Ascending aorta (tissue), 2 donors: ENCODE measurements at regions of chr10 and their contacts with region 1.

Region 1: DNA sequence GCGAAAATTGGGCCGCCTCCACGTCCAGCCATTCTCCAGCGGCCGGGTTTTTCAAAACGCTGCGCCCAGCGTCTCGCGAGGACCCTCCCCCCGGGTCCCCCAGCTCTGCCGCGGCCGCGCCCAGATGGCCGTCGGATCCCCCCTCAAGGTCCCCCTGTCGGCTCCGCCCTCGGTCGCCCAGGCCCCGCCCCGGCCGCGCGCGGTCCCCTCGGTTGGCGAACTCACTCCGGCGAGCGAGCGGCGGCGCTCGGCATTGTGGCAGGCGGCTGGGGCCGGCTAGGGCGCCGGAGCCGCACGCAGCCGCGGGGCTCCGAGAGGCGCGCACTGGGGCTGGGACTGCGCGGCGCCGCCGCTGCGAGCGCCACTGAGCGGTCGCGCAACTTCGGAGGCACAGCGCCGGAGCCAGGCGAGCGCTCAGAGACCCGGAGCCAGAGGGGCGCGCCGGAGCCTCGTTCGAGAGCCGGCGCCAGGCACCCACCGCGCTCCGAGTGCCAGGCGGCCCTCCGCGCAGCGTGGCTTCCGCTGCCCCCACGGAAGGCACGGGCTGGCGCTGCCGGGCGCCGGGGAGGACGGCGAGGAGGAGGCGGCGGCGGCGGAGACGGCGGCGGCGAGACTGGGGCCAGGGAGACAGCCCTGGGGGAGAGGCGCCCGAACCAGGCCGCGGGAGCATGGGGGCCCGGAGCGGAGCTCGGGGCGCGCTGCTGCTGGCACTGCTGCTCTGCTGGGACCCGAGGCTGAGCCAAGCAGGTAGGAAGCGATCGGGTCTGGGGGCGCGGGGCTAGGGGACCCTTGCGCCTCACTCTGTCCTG is at the start of gene UNC5B:
- DNase-seq: peak; percentile 44 to 93
- H3K4me3 ChIP-seq: peak within 1 kb of the TSS; percentile 86 to 92
- H3K27ac ChIP-seq: peak within 1 kb of the TSS; percentile 83 to 84
- H3K4me1 ChIP-seq: peaks cover 0 to 17% of the 10 kb centered on the region in 2 donors
- H3K27me3 ChIP-seq: no peaks in the 10 kb centered on the region
- CTCF ChIP-seq: peak in 2 of 3 experiments; percentile 4 to 66
- total RNA-seq, gene UNC5B: 42.4 TPM

Region 2: DNA sequence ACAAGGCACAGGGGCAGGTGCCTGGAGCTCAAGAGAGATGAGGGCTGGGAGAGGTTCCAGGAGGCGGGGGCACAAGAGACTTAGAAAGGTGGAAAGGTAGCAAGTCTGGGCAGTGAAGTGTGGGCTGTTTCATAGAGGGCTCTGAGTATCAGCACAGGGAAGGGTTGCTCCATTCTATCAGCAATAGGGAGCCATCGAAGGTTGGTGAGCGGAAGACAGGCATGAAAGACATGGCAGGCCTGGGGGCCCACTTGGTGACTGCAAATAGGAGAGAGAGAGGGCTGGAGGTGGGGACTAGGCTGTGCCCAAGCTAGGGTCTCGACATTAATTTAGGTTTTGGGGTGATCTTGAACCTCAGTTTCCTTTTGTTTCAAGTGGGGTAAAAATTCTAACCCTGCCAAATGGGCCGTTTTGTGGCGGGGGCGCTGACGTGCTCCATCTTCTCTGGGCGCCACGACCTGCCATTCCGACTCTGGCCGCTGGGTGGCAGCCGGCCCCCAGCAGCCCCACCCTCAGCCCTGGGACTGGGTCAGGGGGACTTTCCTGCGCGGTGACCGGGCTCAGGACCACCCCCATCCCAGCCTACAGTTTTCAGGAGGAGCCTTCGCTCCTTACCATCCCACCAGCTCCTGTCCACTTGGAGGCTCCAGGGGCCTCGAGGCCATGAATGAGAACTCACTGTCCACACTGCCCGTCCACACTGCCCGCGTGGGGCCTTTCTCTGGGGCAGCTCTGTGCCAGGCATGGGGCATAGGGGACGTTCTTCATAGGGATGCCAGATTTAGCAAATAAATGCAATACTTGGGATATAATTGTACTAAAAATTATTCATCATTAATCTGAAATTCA is 286.9 kb before region 1 on chr10:
- intact Hi-C with region 1: loop called (anchors 1 kb)
- DNase-seq: peak in 1 of 2 donors; percentile 73
- H3K4me3 ChIP-seq: no peak overlapping the region
- H3K27ac ChIP-seq: no peak overlapping the region
- H3K4me1 ChIP-seq: peaks cover 0 to 4% of the 10 kb centered on the region in 2 donors
- H3K27me3 ChIP-seq: no peaks in the 10 kb centered on the region
- CTCF ChIP-seq: peak; percentile 90 to 98 (median 98)

Region 3: GRCh38 chr10:71075086-71075758 is 137.3 kb before region 1 on chr10:
- intact Hi-C with region 1: no loop called
- DNase-seq: peak in 1 of 2 donors; percentile 49
- H3K4me3 ChIP-seq: no peak overlapping the region
- H3K27ac ChIP-seq: no peak overlapping the region
- H3K4me1 ChIP-seq: peaks cover 0 to 6% of the 10 kb centered on the region in 2 donors
- H3K27me3 ChIP-seq: no peaks in the 10 kb centered on the region
- CTCF ChIP-seq: no peak

Region 4: GRCh38 chr10:71234970-71235685 is 22.6 kb after region 1 on chr10:
- intact Hi-C with region 1: loop called (anchors 1 kb)
- DNase-seq: peak in 1 of 2 donors; percentile 78
- H3K4me3 ChIP-seq: no peak overlapping the region
- H3K27ac ChIP-seq: peak overlapping the region; percentile 55 to 81
- H3K4me1 ChIP-seq: peaks cover 8 to 39% of the 10 kb centered on the region in 2 donors
- H3K27me3 ChIP-seq: no peaks in the 10 kb centered on the region
- CTCF ChIP-seq: no peak

Region 5: GRCh38 chr10:71260622-71261325 is 48.3 kb after region 1 on chr10:
- intact Hi-C with region 1: loop called (anchors 1 kb)
- DNase-seq: peak in 1 of 2 donors; percentile 81
- H3K4me3 ChIP-seq: no peak overlapping the region
- H3K27ac ChIP-seq: peak overlapping the region; percentile 39 to 67
- H3K4me1 ChIP-seq: peaks cover 10 to 15% of the 10 kb centered on the region in 2 donors
- H3K27me3 ChIP-seq: no peaks in the 10 kb centered on the region
- CTCF ChIP-seq: no peak

Region 6: GRCh38 chr10:71771821-71772617 is 559.5 kb after region 1 on chr10:
- intact Hi-C with region 1: loop called (anchors 5 kb)
- DNase-seq: peak; percentile 64 to 93
- H3K4me3 ChIP-seq: peak overlapping the region; percentile 69 to 85
- H3K27ac ChIP-seq: peak overlapping the region; percentile 94 to 98
- H3K4me1 ChIP-seq: peaks cover 40 to 54% of the 10 kb centered on the region in 2 donors
- H3K27me3 ChIP-seq: no peaks in the 10 kb centered on the region
- CTCF ChIP-seq: no peak